ENCODE measurements at regions of chr2 and their contacts with region 1.

Region 1: GRCh38 chr2:133581010-133581760 is 12.9 kb upstream of the NCKAP5 start:
- DNase-seq: no peak
- H3K4me3 ChIP-seq: no peak overlapping the region
- H3K27ac ChIP-seq: no peak overlapping the region
- H3K4me1 ChIP-seq: peaks cover 44% of the 10 kb centered on the region
- H3K27me3 ChIP-seq: no peaks in the 10 kb centered on the region
- CTCF ChIP-seq: peak; percentile 10

Region 2: GRCh38 chr2:133532919-133533318 is 48.3 kb before region 1 on chr2:
- intact Hi-C with region 1: no loop called
- DNase-seq: no peak
- H3K4me3 ChIP-seq: no peak overlapping the region
- H3K27ac ChIP-seq: no peak overlapping the region
- H3K4me1 ChIP-seq: no peaks in the 10 kb centered on the region
- H3K27me3 ChIP-seq: no peaks in the 10 kb centered on the region
- CTCF ChIP-seq: no peak

Region 3: DNA sequence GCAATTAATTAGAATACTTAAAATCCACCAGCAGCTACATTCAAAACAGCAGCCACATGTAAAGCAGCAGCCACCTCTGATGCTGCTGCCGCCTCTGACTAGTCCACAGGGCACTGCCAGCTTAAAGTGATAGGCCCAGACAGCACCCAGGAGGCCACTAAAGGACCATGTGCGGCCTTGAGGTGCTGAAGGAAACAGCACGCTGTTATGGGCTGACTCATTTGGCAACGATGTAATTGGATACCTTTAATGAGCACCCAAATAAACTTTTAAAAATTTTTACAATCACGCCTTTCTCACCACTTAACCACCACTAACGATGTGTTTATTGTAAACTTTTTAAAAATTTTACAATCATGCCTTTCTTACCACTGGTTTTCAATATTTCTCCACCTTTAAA is 196.4 kb after region 1 on chr2:
- intact Hi-C with region 1: loop called (anchors 10 kb)
- DNase-seq: peak; percentile 23
- H3K4me3 ChIP-seq: no peak overlapping the region
- H3K27ac ChIP-seq: no peak overlapping the region
- H3K4me1 ChIP-seq: peaks cover 27% of the 10 kb centered on the region
- H3K27me3 ChIP-seq: no peaks in the 10 kb centered on the region
- CTCF ChIP-seq: no peak

Measured in left ventricle myocardium inferior (tissue), 1 donor.